BJ (cell line): ENCODE measurements at regions of chr6 and their contacts with region 1.

Region 1: GRCh38 chr6:155264693-155265320 is 994 bp downstream of the CLDN20 start:
- DNase-seq: no peak
- H3K4me3 ChIP-seq: no peak overlapping the region
- H3K27me3 ChIP-seq: no peaks in the 10 kb centered on the region
- CTCF ChIP-seq: no peak

Region 2: DNA sequence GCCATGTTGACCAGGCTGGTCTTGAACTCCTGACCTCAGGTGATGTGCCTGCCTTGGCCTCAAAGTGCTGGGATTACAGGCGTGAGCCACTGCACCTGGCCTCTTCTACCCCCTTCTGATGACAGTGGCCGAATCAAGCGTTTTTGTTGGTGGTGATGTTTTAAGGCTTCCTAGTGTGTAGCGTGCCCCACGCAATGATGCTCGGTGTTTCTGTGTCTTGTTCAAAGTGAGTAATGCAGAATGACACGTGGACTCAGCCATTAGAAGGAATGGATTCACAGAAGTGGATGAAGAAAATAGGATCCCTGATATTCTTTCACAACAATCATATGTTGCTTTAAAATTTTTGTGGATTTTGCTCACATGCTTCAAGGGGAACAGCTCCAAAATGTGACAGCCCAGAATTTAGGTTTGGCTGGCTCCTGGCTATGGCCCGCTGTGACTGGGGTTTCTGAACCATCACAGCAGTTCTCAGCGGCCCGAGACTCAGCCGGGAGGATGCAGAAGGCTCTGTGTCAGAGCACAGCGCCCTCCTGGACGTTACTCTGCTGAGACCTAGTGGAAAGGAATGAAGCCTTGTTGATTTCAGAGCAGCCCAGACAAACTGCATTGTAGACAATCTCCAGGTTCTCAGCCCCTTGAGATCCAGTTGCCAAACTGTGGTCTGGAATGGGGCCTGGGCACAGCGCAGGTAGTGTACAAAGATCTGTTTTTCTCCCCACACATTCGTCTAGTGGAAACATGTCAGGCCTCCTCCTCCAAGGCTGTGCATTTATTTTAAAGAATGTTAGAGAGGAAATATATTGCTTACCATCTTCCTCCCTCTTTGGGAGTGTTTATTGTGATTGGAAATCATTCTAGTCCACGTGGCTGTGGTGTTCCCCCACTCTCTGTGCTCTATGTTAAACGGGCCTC is 327.2 kb before region 1 on chr6:
- CTCF ChIA-PET with region 1: no interaction called
- POLR2A ChIA-PET with region 1: no interaction called
- DNase-seq: no peak
- H3K4me3 ChIP-seq: no peak overlapping the region
- H3K27me3 ChIP-seq: no peaks in the 10 kb centered on the region
- CTCF ChIP-seq: no peak

Region 3: DNA sequence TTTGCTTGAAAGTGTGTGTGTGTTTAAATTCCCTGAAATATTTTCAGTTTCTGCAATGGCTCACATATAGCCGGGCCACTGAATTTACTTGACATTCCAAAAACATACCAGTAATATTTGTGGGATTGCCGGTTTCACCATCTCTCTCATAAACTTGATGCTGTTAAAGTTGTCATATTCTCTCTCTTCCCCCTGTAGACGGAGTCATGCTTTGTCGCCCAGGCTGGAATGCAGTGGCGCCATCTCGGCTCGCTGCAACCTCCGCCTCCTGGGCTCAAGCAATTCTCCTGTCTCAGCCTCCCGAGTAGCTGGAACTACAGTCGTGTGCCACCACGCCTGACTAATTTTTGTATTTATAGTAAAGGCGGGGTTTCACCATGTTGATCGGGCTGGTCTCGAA is 147.5 kb before region 1 on chr6:
- CTCF ChIA-PET with region 1: no interaction called
- POLR2A ChIA-PET with region 1: no interaction called
- DNase-seq: peak; percentile 89
- H3K4me3 ChIP-seq: no peak overlapping the region
- H3K27me3 ChIP-seq: no peaks in the 10 kb centered on the region
- CTCF ChIP-seq: no peak

Region 4: DNA sequence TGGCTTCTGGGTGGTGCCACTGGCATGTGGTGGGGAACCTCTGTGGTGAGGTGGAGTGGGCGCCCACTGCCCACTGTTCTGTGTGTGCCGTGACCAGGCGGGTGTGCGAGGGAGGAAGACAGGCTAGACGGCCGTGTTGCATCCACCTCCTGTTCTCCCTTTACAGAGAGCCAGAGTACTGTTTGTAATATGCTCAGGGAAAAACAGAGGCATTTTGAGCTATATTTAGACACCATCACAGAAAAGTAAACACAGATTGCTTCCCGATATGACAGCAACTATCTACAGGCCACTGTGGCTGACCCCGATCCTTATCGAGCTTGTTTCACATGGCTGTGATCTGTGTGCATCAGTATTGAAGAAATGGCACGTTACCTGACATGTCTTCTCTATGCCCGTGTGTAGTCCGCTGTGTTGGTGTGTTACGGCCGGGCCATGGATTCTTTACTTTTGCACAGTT is 1558.0 kb after region 1 on chr6:
- CTCF ChIA-PET with region 1: no interaction called
- POLR2A ChIA-PET with region 1: interaction called, 11 read pairs
- DNase-seq: no peak
- H3K4me3 ChIP-seq: no peak overlapping the region
- H3K27me3 ChIP-seq: no peaks in the 10 kb centered on the region
- CTCF ChIP-seq: no peak